ENCODE measurements at regions of chr21 and their contacts with region 1.

Region 1: DNA sequence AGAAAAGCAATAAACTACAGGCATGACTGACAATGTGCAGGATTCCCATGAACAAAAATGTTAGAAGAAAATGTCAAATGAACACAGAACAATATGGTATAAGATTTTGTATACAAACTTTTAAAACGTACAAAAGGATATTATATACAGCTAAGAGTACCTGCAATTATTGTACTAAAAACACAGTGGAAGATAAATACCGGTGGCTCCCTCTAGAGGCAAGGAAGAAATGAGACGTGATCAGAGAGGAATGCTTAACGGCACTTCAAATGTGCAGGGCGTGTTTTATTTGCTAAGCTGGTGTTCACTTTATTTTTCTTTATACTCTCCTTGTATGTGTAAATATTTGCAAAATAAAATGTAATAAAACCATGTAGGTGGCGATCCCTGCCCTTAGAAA is 191.8 kb upstream of the SAMSN1 start:
- DNase-seq: peak; percentile 17
- CTCF ChIP-seq: peak; percentile 37

Region 2: GRCh38 chr21:14241297-14241696 is 496.6 kb before region 1 on chr21:
- CTCF ChIA-PET with region 1: no interaction called
- POLR2A ChIA-PET with region 1: no interaction called
- DNase-seq: no peak
- CTCF ChIP-seq: no peak

Region 3: GRCh38 chr21:14526836-14527695 is 210.9 kb before region 1 on chr21:
- CTCF ChIA-PET with region 1: interaction called, 12 read pairs
- POLR2A ChIA-PET with region 1: no interaction called
- DNase-seq: no peak
- CTCF ChIP-seq: no peak

Region 4: GRCh38 chr21:14686466-14687267 is 51.3 kb before region 1 on chr21:
- CTCF ChIA-PET with region 1: interaction called, 14 read pairs
- POLR2A ChIA-PET with region 1: no interaction called
- DNase-seq: peak; percentile 35
- CTCF ChIP-seq: no peak

Region 5: GRCh38 chr21:14762734-14763694 is 25.1 kb after region 1 on chr21:
- CTCF ChIA-PET with region 1: interaction called, 15 read pairs
- POLR2A ChIA-PET with region 1: no interaction called
- DNase-seq: peak; percentile 67
- CTCF ChIP-seq: no peak